Activated CD4-positive, alpha-beta memory T cell treated with anti-CD3 and anti-CD28 coated beads, Interleukin-2, amount 10 ng/mL, durations not matched to agents 7 days and 5 days (primary cell): ENCODE measurements at regions of chr18 and their contacts with region 1.

Region 1: DNA sequence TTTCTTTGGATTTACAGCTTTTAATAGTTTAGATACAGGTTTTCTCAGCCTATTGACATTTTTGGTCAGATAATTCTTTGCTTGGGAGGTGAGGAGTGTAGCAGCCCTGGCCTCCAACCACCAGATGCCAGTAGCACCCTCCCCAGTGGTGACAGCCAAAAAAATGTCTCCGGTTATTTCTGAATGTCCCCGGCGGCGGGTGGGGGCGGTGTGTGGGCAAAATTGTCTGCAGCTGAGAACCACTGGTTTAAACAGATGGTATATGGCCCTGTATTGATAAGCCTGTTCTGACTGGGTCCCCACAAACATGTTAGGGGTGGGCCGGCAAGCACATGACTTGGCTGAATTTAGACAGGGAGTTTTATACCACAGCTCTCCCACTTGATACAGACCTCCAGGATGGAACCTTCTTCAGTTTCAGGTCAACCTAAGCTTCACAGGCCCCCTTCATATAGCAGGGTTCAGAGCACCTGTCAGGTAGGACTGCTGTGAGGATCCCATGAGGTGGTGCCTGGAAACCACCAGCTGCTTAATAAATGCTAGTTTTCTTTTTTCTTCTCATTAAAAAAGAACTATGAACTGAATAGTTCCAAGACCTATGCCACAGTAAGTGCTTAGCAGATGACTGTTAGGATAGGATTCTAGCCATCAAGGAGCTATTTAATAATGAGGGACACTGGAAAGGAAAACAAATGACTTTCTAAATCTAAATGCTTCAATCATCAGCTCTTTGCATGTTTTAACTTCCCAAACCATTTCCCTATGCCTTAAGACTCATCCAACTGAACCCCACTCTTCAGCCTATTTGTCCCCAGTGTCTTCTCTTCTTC is 18.1 kb downstream of the LPIN2 start:
- DNase-seq: peak; percentile 77
- H3K4me3 Mint-ChIP-seq: no peak overlapping the region
- H3K27ac Mint-ChIP-seq: peak overlapping the region; percentile 42
- H3K4me1 Mint-ChIP-seq: peaks cover 77% of the 10 kb centered on the region
- H3K27me3 Mint-ChIP-seq: no peaks in the 10 kb centered on the region

Region 2: GRCh38 chr18:2932247-2933181 is 62.3 kb before region 1 on chr18:
- CTCF ChIA-PET with region 1: interaction called, 35 read pairs
- POLR2A ChIA-PET with region 1: interaction called, 3 read pairs
- DNase-seq: peak; percentile 36
- H3K4me3 Mint-ChIP-seq: no peak overlapping the region
- H3K27ac Mint-ChIP-seq: peak overlapping the region; percentile 20
- H3K4me1 Mint-ChIP-seq: peaks cover 28% of the 10 kb centered on the region
- H3K27me3 Mint-ChIP-seq: no peaks in the 10 kb centered on the region

Region 3: DNA sequence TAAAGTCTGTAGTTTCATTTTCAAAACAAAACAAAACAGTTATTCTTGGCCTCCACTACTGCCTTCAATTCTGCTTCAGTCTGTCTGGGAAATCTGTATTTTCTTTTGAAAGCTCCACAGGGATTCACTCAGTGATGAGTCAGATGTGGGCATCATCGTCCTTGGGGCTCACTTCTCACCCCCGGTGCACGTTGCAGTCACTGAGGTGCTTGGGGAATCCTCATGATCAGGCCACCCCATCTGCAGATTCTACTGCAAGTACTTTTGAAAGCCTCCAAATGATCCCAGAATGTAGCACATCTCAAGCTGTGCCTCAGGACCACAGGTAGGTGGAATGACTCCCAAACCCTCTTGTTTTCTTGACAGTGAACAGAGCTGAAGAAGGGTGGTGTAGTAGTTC is 16.2 kb before region 1 on chr18:
- CTCF ChIA-PET with region 1: interaction called, 24 read pairs
- POLR2A ChIA-PET with region 1: interaction called, 15 read pairs
- DNase-seq: no peak
- H3K4me3 Mint-ChIP-seq: peak overlapping the region; percentile 63
- H3K27ac Mint-ChIP-seq: peak overlapping the region; percentile 78
- H3K4me1 Mint-ChIP-seq: peaks cover 83% of the 10 kb centered on the region
- H3K27me3 Mint-ChIP-seq: no peaks in the 10 kb centered on the region

Region 4: DNA sequence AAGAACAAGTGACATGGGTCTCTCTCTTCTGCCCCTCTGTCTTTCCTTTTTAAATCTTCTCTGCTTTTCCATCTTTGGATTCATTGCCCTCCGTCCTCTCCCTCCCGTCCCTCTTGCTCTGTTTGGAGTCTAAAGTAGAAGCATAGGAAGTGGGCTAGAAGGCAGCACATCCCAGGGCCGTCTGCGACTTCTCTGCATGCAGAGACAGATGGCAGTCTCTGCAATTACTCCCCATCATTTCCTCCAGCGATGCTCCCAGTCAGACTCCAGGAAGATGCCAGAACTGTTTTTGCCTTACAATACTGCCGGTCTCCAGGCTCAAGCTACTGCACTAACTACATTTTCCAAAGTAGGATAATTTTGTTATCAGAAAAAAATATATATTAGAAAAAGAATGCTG is 53.3 kb after region 1 on chr18:
- CTCF ChIA-PET with region 1: no interaction called
- POLR2A ChIA-PET with region 1: no interaction called
- DNase-seq: no peak
- H3K4me3 Mint-ChIP-seq: no peak overlapping the region
- H3K27ac Mint-ChIP-seq: no peak overlapping the region
- H3K4me1 Mint-ChIP-seq: peaks cover 30% of the 10 kb centered on the region
- H3K27me3 Mint-ChIP-seq: no peaks in the 10 kb centered on the region

Region 5: DNA sequence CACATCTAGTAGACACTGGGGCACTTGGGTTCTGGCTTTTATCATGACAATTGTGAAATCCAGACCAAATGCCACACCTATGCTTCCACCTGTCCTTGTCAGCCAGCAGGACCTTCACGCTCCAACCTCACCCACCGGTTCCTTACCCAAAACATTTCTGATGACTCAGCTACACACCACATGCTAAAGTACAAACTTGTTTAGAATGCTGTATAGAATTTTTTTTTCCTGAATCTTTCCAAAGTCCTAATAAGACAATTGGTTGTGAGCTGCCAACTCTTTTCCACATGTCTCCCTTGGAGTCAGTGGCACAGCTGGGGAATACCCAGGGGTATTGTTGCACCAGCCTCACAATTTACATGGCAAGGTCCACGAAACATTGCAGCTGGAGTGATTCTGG is 93.6 kb after region 1 on chr18:
- CTCF ChIA-PET with region 1: interaction called, 12 read pairs
- POLR2A ChIA-PET with region 1: no interaction called
- DNase-seq: no peak
- H3K4me3 Mint-ChIP-seq: no peak overlapping the region
- H3K27ac Mint-ChIP-seq: no peak overlapping the region
- H3K4me1 Mint-ChIP-seq: peaks cover 6% of the 10 kb centered on the region
- H3K27me3 Mint-ChIP-seq: peaks cover 2% of the 10 kb centered on the region

Region 6: DNA sequence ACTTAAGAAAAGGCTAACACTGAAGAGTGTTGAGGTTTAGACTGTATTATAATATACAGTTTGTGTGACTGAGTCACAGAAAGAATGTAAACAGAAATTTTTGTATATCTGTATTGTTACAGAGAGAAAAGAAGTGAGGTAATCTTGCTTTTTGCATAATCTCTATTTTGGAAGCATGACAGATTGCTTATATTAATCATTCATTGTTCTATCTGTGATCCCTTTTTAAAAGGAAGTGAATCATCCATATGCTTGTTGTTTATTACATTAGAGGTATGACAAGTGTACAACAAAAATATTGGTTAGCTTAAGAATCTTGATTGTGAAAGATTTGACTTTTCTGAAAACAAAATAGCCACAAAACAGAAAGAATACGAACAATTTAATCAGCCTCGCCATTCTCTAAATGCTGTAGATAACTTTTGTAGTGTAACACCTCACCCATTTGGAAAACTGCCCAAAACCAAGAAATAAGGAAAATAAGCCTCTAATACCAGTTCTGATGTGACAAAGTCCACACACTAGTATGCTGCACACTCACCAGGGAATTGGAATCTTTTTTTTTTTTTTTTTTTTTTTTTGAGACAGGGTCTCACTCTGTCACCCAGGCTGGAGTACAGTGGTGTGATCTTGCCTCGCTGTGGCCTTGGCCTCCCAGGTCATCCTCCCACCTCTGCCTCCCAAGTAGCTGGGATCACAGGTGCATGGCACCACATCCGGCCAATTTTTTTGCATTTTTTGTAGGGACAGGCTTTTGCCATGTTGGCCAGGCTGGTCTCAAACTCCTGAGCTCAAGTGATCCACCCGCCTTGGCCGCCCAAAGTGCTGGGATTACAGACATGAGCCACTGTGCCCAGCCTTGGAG is 109.6 kb after region 1 on chr18:
- CTCF ChIA-PET with region 1: no interaction called
- POLR2A ChIA-PET with region 1: no interaction called
- DNase-seq: no peak
- H3K4me3 Mint-ChIP-seq: no peak overlapping the region
- H3K27ac Mint-ChIP-seq: no peak overlapping the region
- H3K4me1 Mint-ChIP-seq: no peaks in the 10 kb centered on the region
- H3K27me3 Mint-ChIP-seq: no peaks in the 10 kb centered on the region

Region 7: DNA sequence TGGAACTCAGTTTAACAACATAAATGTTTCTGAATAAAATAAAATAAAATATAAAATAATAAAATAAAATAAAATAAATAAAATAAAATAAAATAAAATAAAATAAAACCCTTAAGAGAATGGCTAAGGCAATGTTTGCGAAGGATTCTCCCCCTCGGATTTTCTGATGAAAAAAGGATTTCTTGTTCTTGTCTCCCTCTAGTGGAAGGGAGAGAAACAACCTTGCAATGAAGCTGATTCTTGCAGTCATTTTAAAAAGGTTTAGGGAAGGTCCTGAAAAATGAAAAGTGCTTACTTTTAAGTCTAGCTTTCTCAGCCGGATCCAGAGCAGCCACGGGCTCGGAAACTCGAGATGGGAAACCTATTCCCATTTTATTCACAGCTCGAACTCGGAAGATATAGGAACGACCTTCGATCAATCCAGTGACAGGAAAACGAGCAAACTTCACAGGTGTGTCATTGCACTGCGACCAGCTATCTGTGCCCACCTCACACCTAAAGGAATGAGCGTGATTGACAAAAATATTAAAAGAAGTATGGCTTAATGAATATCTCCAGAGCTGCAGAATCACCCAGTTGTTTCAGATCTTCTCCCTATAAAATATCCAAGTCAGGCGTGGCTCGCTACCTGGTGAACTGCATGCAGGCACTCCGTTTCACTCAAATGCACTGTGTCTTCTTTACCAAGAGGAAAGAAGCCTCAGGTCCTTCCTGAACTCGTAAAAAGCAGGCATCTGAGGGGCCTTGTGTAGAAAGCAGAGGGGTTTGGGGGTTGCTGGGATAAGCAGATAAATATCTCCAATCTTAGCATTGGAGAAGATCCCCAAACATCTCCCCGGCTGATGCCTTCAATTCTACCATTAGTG is 156.8 kb after region 1 on chr18:
- CTCF ChIA-PET with region 1: interaction called, 39 read pairs
- POLR2A ChIA-PET with region 1: interaction called, 5 read pairs
- DNase-seq: no peak
- H3K4me3 Mint-ChIP-seq: no peak overlapping the region
- H3K27ac Mint-ChIP-seq: no peak overlapping the region
- H3K4me1 Mint-ChIP-seq: no peaks in the 10 kb centered on the region
- H3K27me3 Mint-ChIP-seq: peaks cover 11% of the 10 kb centered on the region